CD4-positive, alpha-beta memory T cell (primary cell): ENCODE measurements at regions of chr4 and their contacts with region 1.

Region 1: DNA sequence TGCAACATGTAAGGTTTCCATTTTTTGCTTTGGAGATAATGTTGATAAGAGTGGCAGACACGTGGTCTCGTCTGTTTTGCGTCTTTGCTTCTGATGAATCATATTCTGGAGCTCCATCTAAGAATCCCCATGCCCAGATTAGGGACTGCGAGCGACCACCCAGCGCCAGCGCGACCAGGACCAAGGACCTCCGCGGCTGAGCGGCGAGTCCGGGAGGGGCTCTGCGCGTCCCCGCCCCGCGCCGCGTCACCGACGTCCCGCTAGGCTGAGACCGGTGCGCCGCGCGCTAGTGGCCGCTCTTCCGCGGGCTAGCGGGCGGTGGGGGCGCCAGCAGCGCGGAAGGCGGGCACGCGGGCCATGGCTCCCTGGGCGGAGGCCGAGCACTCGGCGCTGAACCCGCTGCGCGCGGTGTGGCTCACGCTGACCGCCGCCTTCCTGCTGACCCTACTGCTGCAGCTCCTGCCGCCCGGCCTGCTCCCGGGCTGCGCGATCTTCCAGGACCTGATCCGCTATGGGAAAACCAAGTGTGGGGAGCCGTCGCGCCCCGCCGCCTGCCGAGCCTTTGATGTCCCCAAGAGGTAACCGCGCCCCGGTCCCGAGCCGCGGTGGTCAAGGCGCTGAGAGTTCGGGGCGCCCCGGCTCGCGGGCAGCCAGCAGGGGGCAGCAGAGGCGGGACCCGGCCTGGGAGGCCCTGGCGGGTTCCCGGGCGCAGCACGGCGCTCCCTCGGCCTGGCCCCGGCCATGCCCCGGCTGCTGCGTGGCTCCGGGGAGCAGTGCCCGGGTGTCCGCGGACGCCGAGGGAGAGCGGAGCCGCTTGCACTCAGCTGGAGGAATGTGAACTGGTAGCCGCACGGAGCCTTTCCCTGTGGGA is at the start of gene SRD5A3:
- DNase-seq: peak; percentile 67 to 81 (median 74)
- H3K4me3 ChIP-seq: peak within 1 kb of the TSS; percentile 37 to 74
- H3K4me3 Mint-ChIP-seq: peak within 1 kb of the TSS; percentile 87 to 93 (median 89)
- H3K27ac ChIP-seq: peak within 1 kb of the TSS; percentile 57
- H3K27ac Mint-ChIP-seq: peak within 1 kb of the TSS; percentile 45 to 93 (median 90)
- H3K4me1 ChIP-seq: peaks cover 20% of the 10 kb centered on the region
- H3K4me1 Mint-ChIP-seq: peaks cover 10 to 19% (median 14%) of the 10 kb centered on the region in 4 donors
- H3K27me3 ChIP-seq: no peaks in the 10 kb centered on the region
- H3K27me3 Mint-ChIP-seq: no peaks in the 10 kb centered on the region
- total RNA-seq, gene SRD5A3: 2.9 to 3.5 TPM

Region 2: GRCh38 chr4:55214172-55214571 is 132.0 kb before region 1 on chr4:
- CTCF ChIA-PET with region 1: no interaction called
- POLR2A ChIA-PET with region 1: no interaction called
- intact Hi-C with region 1: no loop called
- DNase-seq: no peak
- H3K4me3 ChIP-seq: no peak overlapping the region
- H3K4me3 Mint-ChIP-seq: no peak overlapping the region
- H3K27ac ChIP-seq: no peak overlapping the region
- H3K27ac Mint-ChIP-seq: peak overlapping the region in 1 of 7 donors; percentile 19
- H3K4me1 ChIP-seq: no peaks in the 10 kb centered on the region
- H3K4me1 Mint-ChIP-seq: no peaks in the 10 kb centered on the region
- H3K27me3 ChIP-seq: no peaks in the 10 kb centered on the region
- H3K27me3 Mint-ChIP-seq: no peaks in the 10 kb centered on the region

Region 3: GRCh38 chr4:55312489-55313101 is 33.6 kb before region 1 on chr4:
- CTCF ChIA-PET with region 1: interaction called, 18 read pairs
- POLR2A ChIA-PET with region 1: no interaction called
- intact Hi-C with region 1: no loop called
- DNase-seq: peak in 4 of 5 donors; percentile 24 to 39 (median 30)
- H3K4me3 ChIP-seq: no peak overlapping the region
- H3K4me3 Mint-ChIP-seq: no peak overlapping the region
- H3K27ac ChIP-seq: no peak overlapping the region
- H3K27ac Mint-ChIP-seq: no peak overlapping the region
- H3K4me1 ChIP-seq: no peaks in the 10 kb centered on the region
- H3K4me1 Mint-ChIP-seq: no peaks in the 10 kb centered on the region
- H3K27me3 ChIP-seq: no peaks in the 10 kb centered on the region
- H3K27me3 Mint-ChIP-seq: no peaks in the 10 kb centered on the region

Region 4: DNA sequence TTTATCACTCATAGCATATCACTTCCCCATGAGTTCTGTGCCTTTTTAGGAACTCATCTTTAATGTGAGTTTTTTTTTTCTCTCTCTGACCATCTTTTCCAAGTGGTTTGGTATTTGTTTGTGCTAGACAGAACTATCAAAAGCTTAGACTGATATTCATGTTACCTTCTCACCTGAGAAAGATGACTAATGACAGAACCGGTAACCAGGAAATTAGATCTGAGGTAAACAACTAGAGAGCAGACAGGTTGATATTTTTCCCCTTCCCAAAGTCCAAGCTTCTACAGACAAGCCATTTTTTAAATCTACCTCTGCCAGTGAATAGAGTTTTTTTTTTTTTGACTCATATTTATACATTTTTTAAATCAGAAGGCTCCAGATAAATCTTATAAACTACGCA is 17.2 kb before region 1 on chr4:
- CTCF ChIA-PET with region 1: interaction called, 19 read pairs
- POLR2A ChIA-PET with region 1: no interaction called
- intact Hi-C with region 1: no loop called
- DNase-seq: no peak
- H3K4me3 ChIP-seq: no peak overlapping the region
- H3K4me3 Mint-ChIP-seq: no peak overlapping the region
- H3K27ac ChIP-seq: no peak overlapping the region
- H3K27ac Mint-ChIP-seq: no peak overlapping the region
- H3K4me1 ChIP-seq: no peaks in the 10 kb centered on the region
- H3K4me1 Mint-ChIP-seq: no peaks in the 10 kb centered on the region
- H3K27me3 ChIP-seq: no peaks in the 10 kb centered on the region
- H3K27me3 Mint-ChIP-seq: peaks cover 2 to 4% of the 10 kb centered on the region in 2 donors

Region 5: DNA sequence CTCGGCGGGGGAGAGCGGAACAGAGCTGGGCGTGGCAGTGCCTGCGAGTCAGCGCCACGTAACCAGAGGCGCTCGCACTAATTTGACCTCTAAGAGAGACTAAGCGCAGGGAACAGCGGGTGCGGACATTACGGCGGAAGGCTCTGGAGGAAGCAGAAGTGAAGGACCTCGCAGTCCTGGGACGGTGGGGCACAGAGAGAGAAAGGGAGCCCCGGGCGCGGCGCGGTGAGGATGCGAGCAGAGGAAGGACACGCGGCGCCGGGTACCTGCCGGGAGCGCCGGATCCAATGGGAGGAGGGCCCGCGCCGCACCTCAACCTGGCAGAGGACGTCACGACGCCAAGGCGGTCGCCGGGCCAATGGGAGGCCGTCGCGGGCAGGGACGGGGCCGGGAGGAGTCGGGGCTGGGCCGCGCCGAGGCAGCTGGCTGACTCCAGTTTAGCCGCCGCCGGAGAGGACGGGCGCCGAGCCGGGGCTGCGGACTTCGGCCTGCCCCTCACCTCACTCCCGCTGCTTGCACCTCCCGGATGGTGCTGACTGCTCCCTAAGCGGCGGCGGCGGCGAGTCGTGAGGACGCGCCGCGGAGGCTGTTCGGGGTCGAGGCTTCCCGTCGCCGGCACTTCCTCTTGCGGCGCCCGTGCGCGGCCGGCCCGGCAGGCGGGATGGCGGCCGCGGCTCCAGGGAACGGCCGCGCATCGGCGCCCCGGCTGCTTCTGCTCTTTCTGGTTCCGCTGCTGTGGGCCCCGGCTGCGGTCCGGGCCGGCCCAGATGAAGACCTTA is 49.5 kb after region 1 on chr4 and contains the start of gene TMEM165:
- CTCF ChIA-PET with region 1: interaction called, 43 read pairs
- POLR2A ChIA-PET with region 1: interaction called, 11 read pairs
- intact Hi-C with region 1: loop called (anchors 1 kb)
- DNase-seq: peak; percentile 88 to 92 (median 90)
- H3K4me3 ChIP-seq: peak within 1 kb of the TSS; percentile 74 to 75
- H3K4me3 Mint-ChIP-seq: peak within 1 kb of the TSS; percentile 92 to 98 (median 96)
- H3K27ac ChIP-seq: peak within 1 kb of the TSS; percentile 84
- H3K27ac Mint-ChIP-seq: peak within 1 kb of the TSS; percentile 93 to 99 (median 98)
- H3K4me1 ChIP-seq: peaks cover 39% of the 10 kb centered on the region
- H3K4me1 Mint-ChIP-seq: peaks cover 30 to 48% (median 38%) of the 10 kb centered on the region in 4 donors
- H3K27me3 ChIP-seq: no peaks in the 10 kb centered on the region
- H3K27me3 Mint-ChIP-seq: no peaks in the 10 kb centered on the region
- total RNA-seq, gene TMEM165: 61.8 to 74.8 TPM

Region 6: GRCh38 chr4:55539658-55540057 is 193.4 kb after region 1 on chr4:
- CTCF ChIA-PET with region 1: interaction called, 20 read pairs
- POLR2A ChIA-PET with region 1: interaction called, 12 read pairs
- intact Hi-C with region 1: no loop called
- DNase-seq: no peak
- H3K4me3 ChIP-seq: no peak overlapping the region
- H3K4me3 Mint-ChIP-seq: peak overlapping the region in 2 of 8 donors; percentile 5 to 20
- H3K27ac ChIP-seq: no peak overlapping the region
- H3K27ac Mint-ChIP-seq: peak overlapping the region in 1 of 7 donors; percentile 63
- H3K4me1 ChIP-seq: peaks cover 42% of the 10 kb centered on the region
- H3K4me1 Mint-ChIP-seq: peaks cover 43 to 75% (median 56%) of the 10 kb centered on the region in 4 donors
- H3K27me3 ChIP-seq: no peaks in the 10 kb centered on the region
- H3K27me3 Mint-ChIP-seq: no peaks in the 10 kb centered on the region

Region 7: GRCh38 chr4:55736605-55737183 is 390.5 kb after region 1 on chr4:
- CTCF ChIA-PET with region 1: interaction called, 3 read pairs
- POLR2A ChIA-PET with region 1: no interaction called
- intact Hi-C with region 1: loop called (anchors 1 kb)
- DNase-seq: peak in 4 of 5 donors; percentile 2 to 6 (median 4)
- H3K4me3 ChIP-seq: no peak overlapping the region
- H3K4me3 Mint-ChIP-seq: no peak overlapping the region
- H3K27ac ChIP-seq: no peak overlapping the region
- H3K27ac Mint-ChIP-seq: no peak overlapping the region
- H3K4me1 ChIP-seq: no peaks in the 10 kb centered on the region
- H3K4me1 Mint-ChIP-seq: no peaks in the 10 kb centered on the region
- H3K27me3 ChIP-seq: no peaks in the 10 kb centered on the region
- H3K27me3 Mint-ChIP-seq: peaks cover 21 to 22% of the 10 kb centered on the region in 2 donors

Region 8: GRCh38 chr4:55768291-55768690 is 422.1 kb after region 1 on chr4:
- CTCF ChIA-PET with region 1: no interaction called
- POLR2A ChIA-PET with region 1: no interaction called
- intact Hi-C with region 1: no loop called
- DNase-seq: no peak
- H3K4me3 ChIP-seq: no peak overlapping the region
- H3K4me3 Mint-ChIP-seq: no peak overlapping the region
- H3K27ac ChIP-seq: no peak overlapping the region
- H3K27ac Mint-ChIP-seq: peak overlapping the region in 1 of 7 donors; percentile 9
- H3K4me1 ChIP-seq: no peaks in the 10 kb centered on the region
- H3K4me1 Mint-ChIP-seq: no peaks in the 10 kb centered on the region
- H3K27me3 ChIP-seq: no peaks in the 10 kb centered on the region
- H3K27me3 Mint-ChIP-seq: peaks cover 19 to 20% of the 10 kb centered on the region in 2 donors

Region 9: DNA sequence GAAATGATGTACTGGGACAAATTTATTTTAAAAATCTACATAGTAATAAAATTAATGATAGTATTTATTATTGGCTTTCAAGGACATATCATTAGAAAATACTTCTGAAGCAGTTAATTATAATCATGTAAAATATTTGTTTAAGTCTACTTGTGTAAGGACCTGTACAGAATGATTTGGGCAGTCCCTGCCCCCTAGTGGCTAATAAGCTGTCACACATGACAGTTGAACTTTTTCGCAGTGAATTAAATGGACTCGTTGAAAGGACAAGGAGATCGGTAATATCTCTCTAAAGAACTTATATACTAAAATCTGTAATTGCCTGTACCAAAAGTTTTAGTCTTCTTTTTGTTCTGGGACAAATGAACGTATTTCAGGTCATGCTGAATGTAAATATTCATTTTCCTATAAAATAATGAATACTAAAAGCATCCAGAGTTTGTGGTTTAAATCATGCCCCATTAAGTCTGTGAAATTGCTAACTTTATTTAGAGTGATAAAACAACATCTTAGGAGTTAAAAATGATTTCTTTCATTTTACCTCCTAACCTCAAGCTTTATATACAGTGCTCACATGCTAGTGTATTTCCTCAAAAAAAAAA is 520.9 kb after region 1 on chr4:
- CTCF ChIA-PET with region 1: interaction called, 4 read pairs
- POLR2A ChIA-PET with region 1: no interaction called
- intact Hi-C with region 1: loop called (anchors 1 kb)
- DNase-seq: peak in 4 of 5 donors; percentile 50 to 60 (median 51)
- H3K4me3 ChIP-seq: no peak overlapping the region
- H3K4me3 Mint-ChIP-seq: peak overlapping the region in 1 of 8 donors; percentile 37
- H3K27ac ChIP-seq: no peak overlapping the region
- H3K27ac Mint-ChIP-seq: peak overlapping the region in 2 of 7 donors; percentile 67 to 76
- H3K4me1 ChIP-seq: peaks cover 14% of the 10 kb centered on the region
- H3K4me1 Mint-ChIP-seq: peaks cover 8 to 19% (median 17%) of the 10 kb centered on the region in 4 donors
- H3K27me3 ChIP-seq: no peaks in the 10 kb centered on the region
- H3K27me3 Mint-ChIP-seq: no peaks in the 10 kb centered on the region